CD4-positive, alpha-beta memory T cell (primary cell): ENCODE measurements at regions of chr11 and their contacts with region 1.

Region 1: GRCh38 chr11:94511932-94512781 is at the start of gene C11orf97:
- DNase-seq: peak; percentile 36 to 46 (median 41)
- H3K4me3 ChIP-seq: peak within 1 kb of the TSS in 1 of 2 donors; percentile 51
- H3K4me3 Mint-ChIP-seq: peak within 1 kb of the TSS; percentile 73 to 85 (median 80)
- H3K27ac ChIP-seq: no peak within 1 kb of the TSS
- H3K27ac Mint-ChIP-seq: peak within 1 kb of the TSS in 3 of 7 donors; percentile 19 to 73 (median 47)
- H3K4me1 ChIP-seq: peaks cover 13% of the 10 kb centered on the region
- H3K4me1 Mint-ChIP-seq: peaks cover 10 to 17% (median 13%) of the 10 kb centered on the region in 4 donors
- H3K27me3 ChIP-seq: no peaks in the 10 kb centered on the region
- H3K27me3 Mint-ChIP-seq: peaks cover 9 to 12% of the 10 kb centered on the region in 2 donors
- total RNA-seq, gene C11orf97: not detected

Region 2: GRCh38 chr11:95764267-95764898 is 1252.2 kb after region 1 on chr11:
- CTCF ChIA-PET with region 1: no interaction called
- POLR2A ChIA-PET with region 1: no interaction called
- intact Hi-C with region 1: loop called (anchors 10 kb)
- DNase-seq: peak in 4 of 5 donors; percentile 65 to 69 (median 67)
- H3K4me3 ChIP-seq: no peak overlapping the region
- H3K4me3 Mint-ChIP-seq: no peak overlapping the region
- H3K27ac ChIP-seq: no peak overlapping the region
- H3K27ac Mint-ChIP-seq: no peak overlapping the region
- H3K4me1 ChIP-seq: no peaks in the 10 kb centered on the region
- H3K4me1 Mint-ChIP-seq: no peaks in the 10 kb centered on the region
- H3K27me3 ChIP-seq: no peaks in the 10 kb centered on the region
- H3K27me3 Mint-ChIP-seq: peaks cover 0 to 2% of the 10 kb centered on the region in 2 donors